Prostate gland (tissue), 2 donors: ENCODE measurements at regions of chr5 and their contacts with region 1.

Region 1: DNA sequence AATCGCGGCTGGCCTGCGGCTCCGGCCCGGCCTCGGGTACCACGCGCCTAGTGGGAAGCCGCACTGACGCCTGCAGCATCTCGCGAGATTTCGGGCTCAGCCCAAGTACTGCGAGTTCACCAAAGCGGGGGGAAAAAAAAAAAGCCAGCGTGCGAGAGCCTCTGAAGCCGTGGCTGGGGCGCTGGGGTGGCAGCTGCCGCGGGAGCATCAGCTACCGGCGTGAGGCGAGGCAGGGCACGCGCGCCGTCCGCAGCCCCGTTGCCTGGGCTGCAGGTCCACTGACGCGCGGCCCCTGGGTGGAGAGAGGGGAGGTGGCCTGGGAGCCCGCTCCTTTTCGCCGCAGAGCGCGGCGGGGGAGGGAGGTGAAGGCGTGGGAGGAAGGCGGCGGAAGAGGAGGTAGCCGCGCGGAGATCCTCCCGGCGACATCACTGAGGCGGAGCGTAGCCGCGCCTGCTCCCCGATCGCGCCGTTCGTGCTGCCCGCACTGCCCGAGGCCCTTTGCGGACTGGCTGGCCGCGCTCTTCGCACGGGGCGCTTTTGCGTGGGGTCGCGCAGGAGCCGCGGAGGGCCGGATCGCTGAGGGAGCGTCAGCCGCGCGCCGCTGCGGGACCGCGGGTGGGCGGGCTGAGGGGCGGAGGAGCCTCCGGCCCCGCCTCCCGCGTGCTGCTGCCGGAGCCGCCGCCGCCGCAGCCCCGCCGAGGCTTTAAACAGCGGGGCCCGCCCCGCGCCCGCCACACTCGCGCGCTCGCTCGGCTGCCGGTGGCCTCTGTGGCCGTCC is at the start of gene SLC12A2:
- DNase-seq: peak; percentile 94
- H3K4me3 ChIP-seq: peak within 1 kb of the TSS; percentile 83 to 93
- H3K27ac ChIP-seq: peak within 1 kb of the TSS; percentile 96 to 97
- H3K4me1 ChIP-seq: no peaks in the 10 kb centered on the region
- H3K27me3 ChIP-seq: no peaks in the 10 kb centered on the region
- CTCF ChIP-seq: no peak
- POLR2A ChIP-seq: peak; percentile 48
- total RNA-seq, gene SLC12A2: 51.3 to 195 TPM

Region 2: DNA sequence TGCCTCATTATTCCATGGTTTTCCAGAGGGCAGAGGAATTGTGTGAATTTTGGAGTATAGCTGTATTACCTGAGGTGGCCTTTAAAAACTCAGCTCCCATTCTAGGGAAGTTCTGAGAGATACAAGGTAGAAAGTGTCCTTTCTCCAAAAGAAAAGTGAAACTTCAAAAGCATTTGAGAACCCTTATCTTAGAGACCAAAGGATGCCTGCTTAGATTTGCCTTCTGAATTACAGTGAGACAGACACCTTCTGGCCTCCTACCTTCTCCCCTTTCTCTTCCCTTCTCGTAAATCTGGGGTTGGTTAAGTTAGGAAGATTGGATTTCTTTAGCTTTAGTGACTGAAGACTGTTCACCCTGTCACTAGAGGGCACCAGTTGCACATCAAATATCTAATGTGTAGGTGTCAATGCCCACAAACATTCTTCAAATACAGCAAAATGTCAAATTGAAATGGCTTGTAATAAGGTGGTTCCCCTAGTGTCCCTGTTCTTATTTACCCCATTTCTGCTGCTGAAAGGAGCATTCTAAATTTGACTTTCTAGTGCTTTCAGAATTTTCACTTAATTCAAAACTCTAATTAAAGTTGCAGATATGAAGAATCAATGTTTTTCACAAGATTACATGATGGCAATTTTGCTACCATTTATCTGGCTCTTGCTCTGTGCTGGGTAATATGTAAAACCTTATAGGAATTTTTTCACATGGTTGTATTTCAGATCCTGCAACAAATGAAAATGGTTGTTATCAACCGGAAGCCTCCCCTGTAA is 519.0 kb before region 1 on chr5:
- intact Hi-C with region 1: loop called (anchors 5 kb)
- DNase-seq: peak; percentile 60
- H3K4me3 ChIP-seq: no peak overlapping the region
- H3K27ac ChIP-seq: no peak overlapping the region
- H3K4me1 ChIP-seq: no peaks in the 10 kb centered on the region
- H3K27me3 ChIP-seq: no peaks in the 10 kb centered on the region
- CTCF ChIP-seq: peak in 3 of 4 experiments; percentile 66 to 84 (median 79)
- POLR2A ChIP-seq: no peak

Region 3: DNA sequence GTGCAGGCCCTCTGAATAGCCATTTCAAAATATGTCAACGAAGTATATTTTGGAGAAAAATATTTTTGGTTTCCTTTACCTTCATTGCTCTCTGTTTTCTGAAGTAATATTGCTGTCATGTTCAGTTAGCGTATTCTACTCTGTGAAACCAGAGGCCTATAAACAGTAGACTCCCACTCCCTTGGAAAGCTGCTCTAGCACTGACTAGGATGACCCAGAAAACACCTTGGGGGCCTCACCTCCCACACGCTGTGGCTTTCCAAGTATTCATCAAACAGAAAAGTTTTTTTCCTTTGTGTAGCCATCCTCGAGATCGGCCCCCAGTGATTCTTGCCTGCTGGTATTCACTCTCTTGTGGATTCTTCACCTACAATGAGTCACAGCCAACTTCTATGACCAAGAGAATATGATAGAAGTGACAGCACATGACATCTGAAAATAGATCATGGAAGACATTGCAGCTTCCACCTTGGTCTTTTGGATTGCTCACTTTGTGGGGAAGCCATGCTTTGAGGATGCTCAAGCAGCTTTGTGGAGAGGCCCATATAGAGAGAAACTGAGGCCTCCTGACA is 463.2 kb before region 1 on chr5:
- intact Hi-C with region 1: no loop called
- DNase-seq: no peak
- H3K4me3 ChIP-seq: no peak overlapping the region
- H3K27ac ChIP-seq: no peak overlapping the region
- H3K4me1 ChIP-seq: no peaks in the 10 kb centered on the region
- H3K27me3 ChIP-seq: no peaks in the 10 kb centered on the region
- CTCF ChIP-seq: no peak
- POLR2A ChIP-seq: no peak

Region 4: GRCh38 chr5:127766676-127767340 is 316.4 kb before region 1 on chr5:
- intact Hi-C with region 1: loop called (anchors 10 kb)
- DNase-seq: no peak
- H3K4me3 ChIP-seq: no peak overlapping the region
- H3K27ac ChIP-seq: no peak overlapping the region
- H3K4me1 ChIP-seq: no peaks in the 10 kb centered on the region
- H3K27me3 ChIP-seq: no peaks in the 10 kb centered on the region
- CTCF ChIP-seq: no peak
- POLR2A ChIP-seq: no peak

Region 5: DNA sequence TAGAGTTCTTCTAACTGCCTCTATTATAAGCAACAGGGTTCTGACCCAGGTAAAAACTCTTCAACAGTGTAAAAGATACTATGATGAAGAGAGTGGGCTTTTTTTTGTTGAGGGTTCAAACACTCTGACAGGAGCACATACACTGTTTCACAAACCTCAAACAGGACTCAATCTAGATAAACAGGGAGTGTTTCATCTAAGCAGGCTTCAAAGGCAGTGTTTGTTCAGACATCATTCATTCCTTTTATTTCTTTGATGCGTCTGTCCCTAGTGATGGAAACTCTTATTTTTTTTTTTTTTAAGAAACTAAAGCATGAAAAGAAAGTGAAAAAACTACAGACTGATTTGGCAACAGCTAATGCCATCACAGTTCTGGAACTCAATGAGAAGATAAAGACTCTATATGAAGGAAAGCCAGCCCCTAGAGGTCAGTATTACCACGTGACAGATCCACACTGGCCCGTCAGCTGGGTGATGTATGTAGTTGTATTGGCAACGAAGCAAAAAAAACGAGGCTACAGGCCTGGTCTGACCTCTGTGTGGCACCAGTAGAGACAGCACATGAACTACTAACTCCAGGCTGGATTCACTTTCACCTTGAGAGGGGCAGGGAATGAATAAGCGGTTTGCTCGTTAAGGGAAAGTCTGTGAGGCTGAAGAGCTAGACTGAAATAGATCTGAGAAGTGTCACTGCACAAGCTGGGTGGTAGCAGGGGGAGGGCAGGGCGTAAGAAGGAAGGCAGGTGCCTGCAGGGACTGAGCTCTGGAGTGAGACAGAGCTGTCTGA is 207.8 kb before region 1 on chr5:
- intact Hi-C with region 1: loop called (anchors 10 kb)
- DNase-seq: peak; percentile 27
- H3K4me3 ChIP-seq: no peak overlapping the region
- H3K27ac ChIP-seq: no peak overlapping the region
- H3K4me1 ChIP-seq: no peaks in the 10 kb centered on the region
- H3K27me3 ChIP-seq: no peaks in the 10 kb centered on the region
- CTCF ChIP-seq: peak in 1 of 4 experiments; percentile 29
- POLR2A ChIP-seq: no peak

Region 6: GRCh38 chr5:127959152-127959764 is 124.0 kb before region 1 on chr5:
- intact Hi-C with region 1: loop called (anchors 10 kb)
- DNase-seq: peak; percentile 53
- H3K4me3 ChIP-seq: no peak overlapping the region
- H3K27ac ChIP-seq: peak overlapping the region in 1 of 2 donors; percentile 8
- H3K4me1 ChIP-seq: no peaks in the 10 kb centered on the region
- H3K27me3 ChIP-seq: no peaks in the 10 kb centered on the region
- CTCF ChIP-seq: no peak
- POLR2A ChIP-seq: no peak

Region 7: GRCh38 chr5:128174951-128175350 is 91.7 kb after region 1 on chr5:
- intact Hi-C with region 1: no loop called
- DNase-seq: no peak
- H3K4me3 ChIP-seq: no peak overlapping the region
- H3K27ac ChIP-seq: no peak overlapping the region
- H3K4me1 ChIP-seq: no peaks in the 10 kb centered on the region
- H3K27me3 ChIP-seq: no peaks in the 10 kb centered on the region
- CTCF ChIP-seq: no peak
- POLR2A ChIP-seq: no peak

Region 8: GRCh38 chr5:128201065-128201926 is 118.1 kb after region 1 on chr5:
- intact Hi-C with region 1: loop called (anchors 5 kb)
- DNase-seq: peak; percentile 87
- H3K4me3 ChIP-seq: peak overlapping the region in 1 of 2 donors; percentile 14
- H3K27ac ChIP-seq: peak overlapping the region; percentile 6 to 23
- H3K4me1 ChIP-seq: no peaks in the 10 kb centered on the region
- H3K27me3 ChIP-seq: no peaks in the 10 kb centered on the region
- CTCF ChIP-seq: peak; percentile 81 to 96 (median 93)
- POLR2A ChIP-seq: no peak